Sigmoid colon (tissue), 7 donors: ENCODE measurements at regions of chr17 and their contacts with region 1.

Region 1: DNA sequence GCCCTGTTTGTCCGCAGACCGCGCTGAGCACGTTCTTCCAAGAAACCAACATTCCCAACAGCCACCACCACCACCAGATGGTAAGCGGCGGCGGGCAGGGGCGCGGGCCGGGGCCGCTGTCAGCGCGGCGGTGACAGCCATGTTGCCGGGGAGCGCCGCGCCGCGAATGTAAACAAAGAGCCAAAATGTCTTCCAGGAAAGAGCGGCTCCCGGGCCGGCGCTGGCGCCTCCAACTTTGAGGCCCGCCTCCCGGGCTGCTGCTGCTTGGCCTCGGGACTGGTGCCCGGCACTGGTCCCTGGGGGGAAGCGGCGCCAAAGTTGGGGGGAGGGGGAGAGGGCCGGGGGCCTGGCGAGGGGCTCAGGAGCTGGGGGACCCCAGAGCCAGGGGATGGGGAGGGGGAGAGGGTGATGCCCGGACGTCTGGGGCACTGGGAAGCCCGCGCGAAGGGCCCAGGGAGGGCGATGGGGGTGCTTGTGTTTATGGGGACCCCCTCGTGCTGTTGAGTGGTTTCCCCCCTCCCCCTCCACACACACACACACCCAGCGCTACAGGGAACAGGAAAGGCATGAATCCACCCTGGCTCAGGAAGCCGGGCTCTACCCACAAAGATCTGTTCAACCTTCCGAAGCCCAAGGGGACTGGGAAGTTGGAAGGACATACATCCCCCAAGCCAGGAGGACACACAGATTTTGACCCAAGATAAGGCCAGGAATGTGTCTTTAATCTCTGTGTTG is 909 bp downstream of the UBALD2 start:
- DNase-seq: peak; percentile 86
- H3K4me3 ChIP-seq: peak overlapping the region; percentile 71 to 99 (median 93)
- H3K27ac ChIP-seq: peak overlapping the region; percentile 91 to 94 (median 92)
- H3K4me1 ChIP-seq: peaks cover 0 to 59% (median 51%) of the 10 kb centered on the region in 4 donors
- H3K27me3 ChIP-seq: no peaks in the 10 kb centered on the region
- CTCF ChIP-seq: no peak
- EP300 ChIP-seq: no peak
- POLR2A ChIP-seq: no peak

Region 2: GRCh38 chr17:76191896-76192295 is 74.2 kb before region 1 on chr17:
- intact Hi-C with region 1: no loop called
- DNase-seq: no peak
- H3K4me3 ChIP-seq: no peak overlapping the region
- H3K27ac ChIP-seq: no peak overlapping the region
- H3K4me1 ChIP-seq: peaks cover 0 to 10% (median 6%) of the 10 kb centered on the region in 4 donors
- H3K27me3 ChIP-seq: no peaks in the 10 kb centered on the region
- CTCF ChIP-seq: no peak
- EP300 ChIP-seq: no peak
- POLR2A ChIP-seq: no peak

Region 3: DNA sequence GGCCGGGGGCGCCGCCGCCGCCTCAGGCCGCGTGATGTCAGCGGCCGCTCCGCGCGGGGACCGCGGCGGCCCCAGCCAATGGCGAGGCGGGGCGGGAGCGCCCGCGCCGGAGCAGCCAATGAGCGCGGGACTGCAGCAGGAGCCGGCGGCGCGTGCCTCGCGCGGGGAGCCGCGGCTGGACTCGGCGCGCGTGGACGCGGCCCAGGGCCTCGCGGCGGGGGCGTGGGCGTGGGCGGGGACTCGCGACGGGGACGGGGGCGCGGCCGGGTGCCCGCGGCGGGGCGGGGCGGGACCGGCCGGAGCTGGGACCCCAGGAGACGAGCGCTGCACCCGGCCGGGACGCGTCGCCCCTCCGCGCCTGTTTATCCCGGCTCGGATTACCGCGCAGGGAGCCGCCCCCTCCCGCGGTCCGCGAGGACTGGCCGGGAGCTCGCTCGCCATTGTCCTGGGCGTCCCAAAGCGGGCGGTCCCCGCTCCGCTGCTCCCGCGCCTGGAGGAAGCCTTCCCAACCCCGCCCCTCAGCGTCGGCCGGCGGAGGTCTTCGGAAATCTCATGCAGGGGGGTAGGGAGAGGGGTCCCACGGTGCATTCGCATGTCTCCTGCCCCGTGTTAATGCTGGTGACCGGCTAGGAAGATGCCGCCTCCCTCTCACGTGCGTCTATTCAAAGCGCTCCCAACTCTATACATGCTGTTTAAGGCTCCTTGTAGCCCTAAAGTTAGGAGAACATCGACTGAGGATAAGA is 25.4 kb before region 1 on chr17 and contains the start of gene RNF157:
- intact Hi-C with region 1: loop called (anchors 1 kb)
- DNase-seq: peak; percentile 80
- H3K4me3 ChIP-seq: peak within 1 kb of the TSS; percentile 35 to 64 (median 56)
- H3K27ac ChIP-seq: peak within 1 kb of the TSS; percentile 49 to 69 (median 55)
- H3K4me1 ChIP-seq: peaks cover 0 to 20% (median 14%) of the 10 kb centered on the region in 4 donors
- H3K27me3 ChIP-seq: peaks cover 0 to 12% (median 12%) of the 10 kb centered on the region in 3 donors
- CTCF ChIP-seq: no peak
- EP300 ChIP-seq: no peak
- POLR2A ChIP-seq: no peak
- total RNA-seq, gene RNF157: 3.1 to 9.1 (median 4.5) TPM

Region 4: GRCh38 chr17:76337413-76337777 is 71.3 kb after region 1 on chr17:
- intact Hi-C with region 1: no loop called
- DNase-seq: peak; percentile 10
- H3K4me3 ChIP-seq: no peak overlapping the region
- H3K27ac ChIP-seq: no peak overlapping the region
- H3K4me1 ChIP-seq: peaks cover 0 to 10% (median 3%) of the 10 kb centered on the region in 4 donors
- H3K27me3 ChIP-seq: no peaks in the 10 kb centered on the region
- CTCF ChIP-seq: no peak
- EP300 ChIP-seq: no peak
- POLR2A ChIP-seq: no peak